Pancreas (tissue), 10 donors: ENCODE measurements at regions of chr20 and their contacts with region 1.

Region 1: DNA sequence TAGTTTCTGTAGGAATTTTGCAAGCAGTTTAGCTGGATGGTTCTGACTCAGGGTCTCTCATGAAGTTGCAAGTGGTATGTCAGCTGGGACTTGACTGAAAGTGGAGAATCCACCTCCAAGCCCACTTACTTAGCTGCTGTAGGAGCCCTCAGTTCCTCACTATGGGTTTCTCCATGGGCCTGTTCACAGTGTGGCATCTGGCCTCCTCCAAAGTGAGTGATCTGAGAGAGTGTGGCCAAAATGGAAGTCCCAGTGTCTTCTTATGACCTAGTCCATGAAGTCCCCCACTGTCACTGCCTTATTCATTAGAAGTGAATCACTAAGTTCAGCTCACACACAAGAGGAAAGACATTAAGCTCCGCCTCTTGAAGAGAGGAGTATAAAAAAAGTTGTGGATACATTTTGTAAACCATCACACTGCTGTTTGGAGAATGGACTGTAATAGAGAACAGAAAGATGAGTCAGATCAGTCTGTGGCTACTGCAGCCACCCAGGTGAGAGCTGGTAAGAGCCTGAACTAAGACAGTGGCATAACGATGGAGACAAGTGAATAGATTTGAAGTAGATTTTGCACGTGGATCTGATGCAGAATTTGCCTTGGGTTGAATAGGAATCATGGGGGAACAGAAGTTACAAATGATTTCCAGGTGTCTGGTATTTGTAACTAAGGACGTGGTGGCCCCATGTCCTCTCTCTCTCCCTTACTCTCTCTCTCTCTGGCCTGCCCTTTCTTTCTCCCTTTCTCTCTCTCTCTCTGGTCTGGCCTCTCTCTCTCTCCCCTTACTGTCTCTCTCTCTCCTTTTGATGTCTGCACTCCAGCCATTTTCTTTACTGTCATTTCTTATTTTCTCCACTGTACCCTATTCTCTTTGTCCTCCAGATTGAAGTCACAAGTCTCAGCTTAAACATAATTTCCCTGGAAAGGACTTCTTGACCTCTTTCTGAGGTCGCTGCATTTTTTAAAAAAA is 4.7 kb upstream of the NELFCD start:
- DNase-seq: no peak
- ATAC-seq: no peak
- H3K4me3 ChIP-seq: no peak overlapping the region
- H3K27ac ChIP-seq: no peak overlapping the region
- H3K4me1 ChIP-seq: no peaks in the 10 kb centered on the region
- H3K27me3 ChIP-seq: no peaks in the 10 kb centered on the region
- CTCF ChIP-seq: no peak

Region 2: GRCh38 chr20:58890518-58891085 is 85.7 kb before region 1 on chr20:
- intact Hi-C with region 1: loop called in 1 of 3 experiments (anchors 10 kb)
- DNase-seq: peak; percentile 59 to 81 (median 75)
- ATAC-seq: peak; percentile 30 to 56 (median 51)
- H3K4me3 ChIP-seq: peak overlapping the region; percentile 35 to 68 (median 55)
- H3K27ac ChIP-seq: peak overlapping the region; percentile 57 to 98 (median 88)
- H3K4me1 ChIP-seq: peaks cover 22 to 25% (median 24%) of the 10 kb centered on the region in 3 donors
- H3K27me3 ChIP-seq: no peaks in the 10 kb centered on the region
- CTCF ChIP-seq: no peak